HepG2 (cell line): ENCODE measurements at regions of chr17 and their contacts with region 1.

Region 1: DNA sequence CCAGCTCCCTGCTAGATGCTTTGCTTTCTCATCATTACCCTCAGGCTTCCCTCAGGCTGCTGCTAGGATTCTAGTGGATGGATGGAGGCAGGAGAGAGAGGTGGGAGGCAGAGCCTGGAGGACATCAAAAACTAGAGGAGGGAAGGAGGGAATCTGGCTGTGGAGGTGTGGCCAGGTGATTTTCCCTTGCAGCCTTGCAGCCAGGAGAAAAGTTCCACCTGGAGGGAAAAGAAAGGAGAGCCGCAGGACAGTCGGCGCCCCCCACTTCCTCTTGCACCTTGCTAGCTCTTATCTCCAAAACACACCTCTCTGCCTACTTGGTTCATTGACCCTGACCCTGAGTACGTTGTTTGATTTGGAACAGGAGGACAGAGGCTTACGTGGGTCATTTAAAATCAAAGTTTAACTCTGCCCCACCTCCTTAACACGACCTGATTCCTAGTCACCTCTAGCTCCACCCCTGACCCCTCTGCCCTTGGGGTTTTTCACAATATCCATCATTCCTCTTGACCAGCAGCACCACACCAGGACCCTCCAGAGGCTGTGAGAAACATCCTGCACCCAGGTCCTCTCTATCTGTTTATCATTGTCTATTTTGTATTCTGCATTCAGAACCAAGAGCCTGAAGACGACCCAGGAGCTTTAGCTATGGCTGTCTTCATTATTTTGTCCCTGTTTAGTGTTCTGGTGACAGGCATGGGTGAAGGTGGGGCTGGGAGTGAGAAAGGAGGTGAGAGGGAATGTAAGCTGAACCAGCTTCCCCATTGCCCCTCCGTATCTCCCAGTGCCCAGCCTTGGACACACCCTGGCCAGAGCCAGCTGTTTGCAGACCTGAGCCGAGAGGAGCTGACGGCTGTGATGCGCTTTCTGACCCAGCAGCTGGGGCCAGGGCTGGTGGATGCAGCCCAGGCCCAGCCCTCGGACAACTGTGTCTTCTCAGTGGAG is 15.9 kb downstream of the AOC3 start:
- DNase-seq: peak; percentile 68
- ATAC-seq: peak; percentile 60
- H3K4me3 ChIP-seq: peak overlapping the region in 2 of 3 experiments; percentile 18 to 44; a peak in 4 of 6 replicates
- H3K27ac ChIP-seq: peak overlapping the region; percentile 62
- H3K4me1 ChIP-seq: peaks cover 73% of the 10 kb centered on the region
- H3K27me3 ChIP-seq: no peaks in the 10 kb centered on the region
- CTCF ChIP-seq: no peak
- EP300 ChIP-seq: peak in 1 of 2 experiments; percentile 91; a peak in 2 of 4 replicates
- POLR2A ChIP-seq: peak in 1 of 2 experiments; percentile 18; a peak in 1 of 4 replicates
- RAD21 ChIP-seq: no peak

Region 2: GRCh38 chr17:42843358-42843934 is 23.5 kb before region 1 on chr17:
- CTCF ChIA-PET with region 1: no interaction called
- POLR2A ChIA-PET with region 1: interaction called, 14 read pairs
- in situ Hi-C with region 1: no loop called
- intact Hi-C with region 1: no loop called
- DNase-seq: peak; percentile 73
- ATAC-seq: peak; percentile 71
- H3K4me3 ChIP-seq: no peak overlapping the region
- H3K27ac ChIP-seq: no peak overlapping the region
- H3K4me1 ChIP-seq: peaks cover 11% of the 10 kb centered on the region; the same call in 1 of the 2 replicates
- H3K27me3 ChIP-seq: no peaks in the 10 kb centered on the region
- CTCF ChIP-seq: peak; percentile 97
- EP300 ChIP-seq: no peak
- POLR2A ChIP-seq: peak in 1 of 2 experiments; percentile 43; a peak in 1 of 4 replicates
- RAD21 ChIP-seq: peak; percentile 97

Region 3: DNA sequence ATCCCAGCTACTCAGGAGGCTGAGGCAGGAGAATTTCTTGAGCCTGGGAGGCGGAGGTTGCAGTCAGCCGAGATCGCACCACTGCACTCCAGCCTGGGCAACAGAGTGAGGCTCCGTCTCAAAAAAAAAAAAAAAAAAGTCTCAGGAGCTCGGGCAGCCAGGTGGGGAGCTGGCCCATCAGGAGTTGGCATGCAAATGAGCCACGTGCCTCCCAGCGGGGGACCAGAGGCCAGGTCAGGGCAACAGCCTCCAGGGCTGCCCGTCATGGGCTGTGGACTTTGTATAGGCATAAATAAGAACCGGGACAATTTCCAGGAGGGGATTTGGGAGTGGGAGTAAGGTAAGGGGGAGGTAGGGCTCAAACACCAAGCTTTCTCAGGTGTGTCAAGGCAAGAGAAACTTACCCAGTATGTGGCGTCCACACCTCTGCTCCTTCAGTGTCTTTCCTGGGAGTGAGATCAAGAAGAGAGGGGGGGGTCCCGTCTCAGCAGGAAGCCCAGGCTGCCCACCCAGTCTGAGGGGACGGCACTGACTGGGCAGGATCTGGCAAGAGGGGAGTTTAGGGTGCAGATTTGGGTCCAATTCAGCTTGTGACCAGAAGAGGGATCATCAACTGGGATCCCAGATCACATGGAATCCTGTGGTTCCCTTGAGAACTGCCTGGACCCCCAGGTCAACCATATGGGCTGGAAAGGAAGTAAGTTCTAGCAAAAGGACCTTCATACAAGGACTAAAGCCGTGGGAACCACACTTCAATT is 11.4 kb after region 1 on chr17:
- CTCF ChIA-PET with region 1: no interaction called
- POLR2A ChIA-PET with region 1: interaction called, 18 read pairs
- in situ Hi-C with region 1: no loop called
- intact Hi-C with region 1: no loop called
- DNase-seq: peak; percentile 59
- ATAC-seq: peak; percentile 78
- H3K4me3 ChIP-seq: peak overlapping the region in 1 of 3 experiments; percentile 31; a peak in 2 of 6 replicates
- H3K27ac ChIP-seq: no peak overlapping the region
- H3K4me1 ChIP-seq: peaks cover 69% of the 10 kb centered on the region
- H3K27me3 ChIP-seq: no peaks in the 10 kb centered on the region
- CTCF ChIP-seq: peak; percentile 35
- EP300 ChIP-seq: peak in 1 of 2 experiments; percentile 67; a peak in 2 of 4 replicates
- POLR2A ChIP-seq: no peak
- RAD21 ChIP-seq: peak; percentile 43

Region 4: DNA sequence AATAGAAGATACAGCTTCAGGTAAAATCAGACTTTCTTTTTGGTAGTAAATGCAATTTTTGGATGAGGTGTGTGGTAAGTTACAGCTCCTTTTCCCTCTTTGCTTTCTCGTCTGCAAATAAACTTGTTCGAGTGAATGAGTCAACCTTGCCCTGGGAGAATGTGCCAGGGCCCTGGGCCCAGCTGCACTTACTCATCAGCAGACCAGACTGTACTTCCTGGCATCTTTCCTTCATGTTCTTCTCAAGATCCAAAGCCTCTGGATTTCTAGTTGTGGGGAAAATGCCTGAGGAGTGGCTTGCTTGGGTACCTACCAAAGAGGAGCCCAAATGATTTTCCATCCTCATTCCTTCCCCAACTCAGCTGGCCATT is 28.3 kb after region 1 on chr17:
- CTCF ChIA-PET with region 1: no interaction called
- POLR2A ChIA-PET with region 1: interaction called, 20 read pairs
- in situ Hi-C with region 1: no loop called
- intact Hi-C with region 1: no loop called
- DNase-seq: no peak
- ATAC-seq: no peak
- H3K4me3 ChIP-seq: peak overlapping the region; percentile 9 to 57 (median 22); a peak in 4 of 6 replicates
- H3K27ac ChIP-seq: peak overlapping the region; percentile 85
- H3K4me1 ChIP-seq: peaks cover 95% of the 10 kb centered on the region
- H3K27me3 ChIP-seq: no peaks in the 10 kb centered on the region
- CTCF ChIP-seq: no peak
- EP300 ChIP-seq: no peak
- POLR2A ChIP-seq: no peak
- RAD21 ChIP-seq: no peak

Region 5: DNA sequence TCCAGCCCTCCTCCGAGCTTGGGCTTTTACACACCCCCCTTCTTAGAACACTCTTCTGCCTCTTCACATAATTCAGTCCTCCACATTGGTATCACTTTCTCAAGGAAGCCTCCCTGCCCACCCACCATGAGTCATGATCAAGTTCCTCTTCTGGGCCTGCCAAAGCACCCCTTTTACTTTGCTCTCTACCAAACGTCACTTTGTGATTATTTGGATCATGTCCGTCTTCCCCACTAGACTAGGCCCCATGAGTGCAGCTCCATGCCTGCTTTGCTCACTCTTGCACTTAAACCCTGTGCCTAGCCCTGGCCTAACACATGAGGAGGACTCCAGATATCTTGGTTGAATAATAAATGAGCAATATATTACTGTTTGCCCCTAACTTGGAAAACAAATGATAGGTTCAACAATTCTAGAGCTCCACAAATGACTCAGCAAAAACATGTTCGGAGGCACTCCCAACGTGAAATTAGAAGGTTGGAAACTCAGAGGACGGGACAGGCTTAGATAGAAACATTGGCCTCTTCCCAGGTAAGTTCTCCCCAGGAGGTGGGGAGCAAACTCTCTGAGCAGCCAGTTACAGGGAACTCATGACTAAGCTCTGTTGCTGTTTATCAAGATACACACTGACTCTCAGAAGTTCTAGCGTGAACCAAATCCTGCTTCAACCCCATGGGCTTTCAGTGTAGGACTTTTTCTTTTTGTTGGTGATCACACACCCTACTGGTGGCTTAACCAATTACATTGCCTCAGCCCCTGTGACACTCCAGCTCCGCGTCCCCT is 62.0 kb after region 1 on chr17:
- CTCF ChIA-PET with region 1: no interaction called
- POLR2A ChIA-PET with region 1: interaction called, 14 read pairs
- in situ Hi-C with region 1: no loop called
- intact Hi-C with region 1: no loop called
- DNase-seq: peak; percentile 92
- ATAC-seq: peak; percentile 96
- H3K4me3 ChIP-seq: peak overlapping the region; percentile 18 to 55 (median 38); a peak in 4 of 6 replicates
- H3K27ac ChIP-seq: peak overlapping the region; percentile 83
- H3K4me1 ChIP-seq: peaks cover 38% of the 10 kb centered on the region
- H3K27me3 ChIP-seq: no peaks in the 10 kb centered on the region; a peak in 1 of 5 replicates
- CTCF ChIP-seq: peak; percentile 90
- EP300 ChIP-seq: peak in 1 of 2 experiments; percentile 35; a peak in 1 of 4 replicates
- POLR2A ChIP-seq: no peak
- RAD21 ChIP-seq: peak; percentile 94